Activated naive CD4-positive, alpha-beta T cell treated with anti-CD3 and anti-CD28 coated beads for 36 hours (primary cell): ENCODE measurements at regions of chr20 and their contacts with region 1.

Region 1: DNA sequence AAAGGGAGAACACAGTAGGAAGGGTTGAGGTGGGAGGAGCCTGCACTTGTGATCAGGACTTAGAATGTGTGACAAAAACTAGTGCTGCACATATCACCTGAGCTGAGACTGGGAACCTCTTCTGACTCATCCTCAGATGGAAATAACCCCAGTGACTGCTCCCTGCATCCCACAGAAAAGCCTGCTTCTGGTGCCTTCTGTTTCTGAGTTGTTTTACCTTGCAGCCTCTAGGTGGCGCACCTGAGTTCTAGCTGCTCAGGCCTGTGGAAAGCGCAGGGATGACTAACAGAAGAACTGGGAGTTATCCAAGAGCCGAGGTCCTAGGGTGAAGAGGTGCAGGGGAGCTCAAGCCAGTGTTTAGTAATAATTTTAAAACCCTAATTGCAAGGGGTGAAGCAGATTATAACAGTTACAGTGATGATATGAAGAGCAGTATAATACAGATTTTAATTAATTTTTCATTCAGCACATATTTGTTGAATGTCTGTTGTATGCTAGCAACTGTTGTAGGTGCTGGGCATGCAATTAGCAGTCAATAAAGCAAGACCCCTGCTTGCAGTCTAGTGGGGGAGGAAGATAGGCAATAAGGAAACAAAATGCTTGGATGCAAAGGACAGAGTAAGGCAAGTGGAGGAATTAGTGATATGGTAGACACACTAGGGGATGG is 302.5 kb downstream of the DHX35 start:
- DNase-seq: peak; percentile 65
- H3K4me3 Mint-ChIP-seq: no peak overlapping the region
- H3K27ac Mint-ChIP-seq: no peak overlapping the region
- H3K4me1 Mint-ChIP-seq: no peaks in the 10 kb centered on the region
- H3K27me3 Mint-ChIP-seq: peaks cover 2% of the 10 kb centered on the region

Region 2: DNA sequence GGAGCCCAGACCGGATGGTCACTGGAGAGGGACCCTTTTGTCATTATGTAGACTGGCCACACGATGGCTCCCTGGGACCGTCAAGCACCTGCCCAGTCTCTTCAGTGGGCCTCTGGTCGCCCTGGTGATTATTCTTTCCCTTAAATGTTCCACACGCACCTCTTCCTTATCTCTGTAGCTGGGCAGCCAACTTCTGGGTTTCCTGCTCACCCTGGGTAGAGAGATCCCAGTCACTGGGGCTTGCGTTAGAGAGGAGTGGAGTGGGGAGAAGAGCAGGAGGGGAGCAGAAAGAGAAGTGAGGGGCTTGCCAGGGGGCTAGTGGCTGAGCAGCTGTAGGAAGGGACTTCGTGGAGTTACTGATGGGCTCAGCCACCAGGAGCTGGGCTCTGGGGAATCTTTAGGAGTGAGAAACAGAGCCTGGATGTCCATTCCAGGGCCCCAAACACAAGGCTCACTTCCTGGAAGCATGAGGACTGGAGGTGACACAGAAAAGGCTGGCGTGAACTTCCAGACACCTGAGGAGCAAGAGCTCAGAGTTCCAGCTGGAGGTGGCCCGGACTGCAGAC is 152.4 kb before region 1 on chr20:
- CTCF ChIA-PET with region 1: no interaction called
- intact Hi-C with region 1: loop called (anchors 5 kb)
- DNase-seq: peak; percentile 29
- H3K4me3 Mint-ChIP-seq: no peak overlapping the region
- H3K27ac Mint-ChIP-seq: no peak overlapping the region
- H3K4me1 Mint-ChIP-seq: no peaks in the 10 kb centered on the region
- H3K27me3 Mint-ChIP-seq: peaks cover 49% of the 10 kb centered on the region

Region 3: DNA sequence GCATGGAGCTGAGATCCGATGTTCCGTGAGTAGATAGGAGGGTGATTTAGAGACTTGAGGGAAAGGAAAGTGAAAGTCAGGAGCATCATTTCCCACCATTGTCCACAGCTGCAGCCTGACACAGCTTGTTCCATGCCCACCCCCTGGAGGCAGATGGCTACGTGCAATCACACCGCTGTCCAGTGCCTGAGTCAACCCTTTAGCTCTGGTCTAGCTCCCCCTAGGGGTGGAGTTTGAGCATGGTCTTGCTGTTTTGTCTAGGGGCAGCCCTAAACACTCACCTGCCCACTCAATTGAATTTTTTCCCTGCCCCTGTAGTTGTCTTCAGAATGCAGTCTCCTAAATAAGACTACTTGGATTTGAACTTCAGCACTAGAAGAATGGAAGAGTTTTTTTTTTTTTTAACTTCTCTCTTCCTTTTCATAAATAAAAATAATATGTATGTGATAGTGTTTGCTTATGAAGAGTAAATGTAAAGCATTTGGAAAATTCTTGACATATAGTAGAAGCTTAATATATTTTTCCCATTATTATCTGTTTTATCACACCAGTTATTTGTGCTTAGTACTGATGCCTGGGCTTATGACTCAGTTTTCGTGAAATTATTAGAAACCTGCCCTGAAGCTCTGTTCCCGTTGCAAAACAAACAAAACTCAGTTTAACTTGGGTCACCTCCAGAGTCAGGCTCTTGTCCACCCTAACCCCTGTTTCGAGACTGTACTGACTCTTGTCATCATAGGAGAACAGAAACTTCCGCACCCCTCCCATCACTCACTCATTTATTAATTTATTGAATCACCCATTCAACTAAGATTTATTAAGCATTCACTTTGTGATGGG is 609.6 kb after region 1 on chr20:
- CTCF ChIA-PET with region 1: interaction called, 7 read pairs
- intact Hi-C with region 1: loop called (anchors 2 kb)
- DNase-seq: peak; percentile 52
- H3K4me3 Mint-ChIP-seq: no peak overlapping the region
- H3K27ac Mint-ChIP-seq: no peak overlapping the region
- H3K4me1 Mint-ChIP-seq: no peaks in the 10 kb centered on the region
- H3K27me3 Mint-ChIP-seq: peaks cover 6% of the 10 kb centered on the region